ENCODE measurements at regions of chr9 and their contacts with region 1.

Region 1: DNA sequence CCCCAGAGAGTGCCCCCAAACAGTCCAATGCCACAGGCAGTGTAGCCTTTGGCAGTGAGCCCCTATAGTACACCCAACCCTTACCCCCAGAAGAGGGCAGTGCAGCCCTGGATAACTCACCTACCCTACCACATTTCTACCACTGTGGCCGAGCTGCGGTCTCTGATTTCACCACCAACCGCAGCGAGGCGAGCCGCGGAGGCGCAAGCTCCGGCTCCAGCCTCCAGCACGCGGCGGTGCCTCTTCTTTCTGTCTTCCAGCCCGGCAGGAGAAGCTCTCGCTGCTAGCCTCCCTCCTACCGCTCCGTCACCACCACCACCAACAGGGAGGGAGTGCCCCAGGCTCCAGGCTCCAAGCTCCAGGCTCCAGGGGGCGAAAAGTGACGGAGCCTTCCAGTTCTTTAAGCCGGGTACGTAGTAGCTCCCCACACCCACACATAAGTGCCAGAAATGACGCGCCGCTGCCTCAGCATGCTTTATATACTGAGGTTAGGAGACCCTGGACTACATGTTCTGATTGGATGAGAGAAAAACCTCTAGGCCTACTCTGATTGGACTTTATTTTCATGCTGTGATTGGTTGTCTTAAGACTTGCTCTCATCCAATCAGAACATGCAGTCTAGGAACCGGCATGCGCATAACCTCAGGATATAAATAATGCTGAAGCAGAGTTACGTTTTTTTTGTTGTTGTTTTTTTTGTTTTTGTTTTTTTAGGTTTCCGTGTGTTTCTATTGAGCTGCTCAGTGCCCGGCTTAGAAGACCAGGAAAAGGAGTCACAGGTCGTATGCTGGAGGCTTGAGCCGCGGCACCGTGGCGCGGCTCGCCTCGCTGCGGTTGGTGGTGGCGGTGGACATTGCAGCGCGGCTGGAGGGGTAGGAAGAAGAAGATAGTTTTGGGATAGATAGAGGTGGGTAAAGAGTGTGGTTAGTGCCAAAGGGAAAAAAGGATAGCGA is at the start of gene PCAT7:
- DNase-seq: peak; percentile 85
- H3K4me3 ChIP-seq: peak within 1 kb of the TSS; percentile 44
- H3K27ac ChIP-seq: peak within 1 kb of the TSS; percentile 85
- H3K4me1 ChIP-seq: no peaks in the 10 kb centered on the region
- H3K27me3 ChIP-seq: no peaks in the 10 kb centered on the region
- CTCF ChIP-seq: peak; percentile 42
- total RNA-seq, gene PCAT7: 2.1 to 2.5 TPM

Region 2: GRCh38 chr9:94603259-94604160 is 48.8 kb after region 1 on chr9:
- intact Hi-C with region 1: loop called (anchors 5 kb)
- DNase-seq: peak; percentile 93
- H3K4me3 ChIP-seq: no peak overlapping the region
- H3K27ac ChIP-seq: peak overlapping the region; percentile 50
- H3K4me1 ChIP-seq: peaks cover 9% of the 10 kb centered on the region
- H3K27me3 ChIP-seq: no peaks in the 10 kb centered on the region
- CTCF ChIP-seq: peak; percentile 71

Region 3: DNA sequence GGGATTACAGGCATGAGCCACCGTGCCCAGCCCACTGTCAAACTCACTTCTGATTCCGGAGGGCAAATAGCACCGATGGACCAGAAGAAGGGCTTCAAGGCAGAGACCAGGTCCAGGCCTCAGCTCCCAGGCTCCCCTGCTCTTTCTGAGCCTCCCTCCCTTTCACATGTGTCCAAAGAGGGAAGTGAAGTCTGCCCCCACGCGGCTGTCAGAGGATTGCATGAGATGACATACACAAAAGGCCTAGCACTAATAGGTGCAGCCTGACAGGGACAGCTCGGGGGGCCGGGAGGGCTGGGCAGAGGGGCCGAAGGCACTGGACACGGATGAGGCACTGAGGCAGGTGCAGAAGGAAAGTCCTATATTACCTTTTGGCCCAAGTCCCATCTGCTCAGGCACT is 68.5 kb after region 1 on chr9:
- intact Hi-C with region 1: loop called (anchors 5 kb)
- DNase-seq: peak; percentile 82
- H3K4me3 ChIP-seq: no peak overlapping the region
- H3K27ac ChIP-seq: no peak overlapping the region
- H3K4me1 ChIP-seq: no peaks in the 10 kb centered on the region
- H3K27me3 ChIP-seq: no peaks in the 10 kb centered on the region
- CTCF ChIP-seq: peak; percentile 41

Region 4: GRCh38 chr9:94681508-94681907 is 126.8 kb after region 1 on chr9:
- intact Hi-C with region 1: no loop called
- DNase-seq: peak; percentile 69
- H3K4me3 ChIP-seq: no peak overlapping the region
- H3K27ac ChIP-seq: no peak overlapping the region
- H3K4me1 ChIP-seq: no peaks in the 10 kb centered on the region
- H3K27me3 ChIP-seq: no peaks in the 10 kb centered on the region
- CTCF ChIP-seq: peak; percentile 56